CD4-positive, alpha-beta T cell (primary cell): ENCODE measurements at regions of chr2 and their contacts with region 1.

Region 1: GRCh38 chr2:42256505-42256904 is 87.4 kb downstream of the EML4 start:
- DNase-seq: peak in 2 of 14 experiments; percentile 21 to 41
- ATAC-seq: no peak
- H3K4me3 ChIP-seq: no peak overlapping the region
- H3K4me3 Mint-ChIP-seq: peak overlapping the region; percentile 23
- H3K27ac ChIP-seq: peak overlapping the region in 1 of 2 donors; percentile 19
- H3K27ac Mint-ChIP-seq: peak overlapping the region; percentile 45
- H3K4me1 ChIP-seq: peaks cover 8% of the 10 kb centered on the region
- H3K4me1 Mint-ChIP-seq: peaks cover 56% of the 10 kb centered on the region
- H3K27me3 ChIP-seq: no peaks in the 10 kb centered on the region
- H3K27me3 Mint-ChIP-seq: no peaks in the 10 kb centered on the region
- CTCF ChIP-seq: no peak

Region 2: DNA sequence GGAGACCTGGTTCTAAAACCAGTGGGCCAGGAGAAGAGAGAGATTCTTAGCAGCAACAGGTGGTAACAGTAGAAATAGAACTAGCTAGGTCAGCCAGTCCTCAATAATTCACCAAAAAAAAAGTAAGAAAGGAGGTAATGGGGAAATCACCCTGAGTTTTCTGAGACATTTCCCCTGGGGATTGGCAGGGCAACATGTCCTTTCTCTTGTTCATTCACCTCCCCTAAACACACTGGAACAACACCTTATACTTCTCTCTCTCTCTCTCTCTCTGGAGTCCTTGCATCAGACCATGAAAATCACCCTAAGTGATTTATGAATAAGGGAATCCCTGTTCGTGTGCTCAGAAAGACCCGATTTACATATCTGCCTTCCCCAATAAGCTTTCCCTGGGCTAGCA is 39.7 kb after region 1 on chr2:
- CTCF ChIA-PET with region 1: no interaction called
- POLR2A ChIA-PET with region 1: no interaction called
- intact Hi-C with region 1: loop called (anchors 5 kb)
- DNase-seq: peak in 3 of 14 experiments; percentile 14 to 49 (median 38)
- ATAC-seq: no peak
- H3K4me3 ChIP-seq: no peak overlapping the region
- H3K4me3 Mint-ChIP-seq: peak overlapping the region; percentile 0
- H3K27ac ChIP-seq: peak overlapping the region in 1 of 2 donors; percentile 66
- H3K27ac Mint-ChIP-seq: peak overlapping the region; percentile 67
- H3K4me1 ChIP-seq: peaks cover 22% of the 10 kb centered on the region
- H3K4me1 Mint-ChIP-seq: peaks cover 67% of the 10 kb centered on the region
- H3K27me3 ChIP-seq: no peaks in the 10 kb centered on the region
- H3K27me3 Mint-ChIP-seq: no peaks in the 10 kb centered on the region
- CTCF ChIP-seq: no peak

Region 3: GRCh38 chr2:42974721-42975717 is 718.5 kb after region 1 on chr2:
- CTCF ChIA-PET with region 1: no interaction called
- POLR2A ChIA-PET with region 1: no interaction called
- intact Hi-C with region 1: no loop called
- DNase-seq: peak; percentile 13 to 71 (median 46)
- ATAC-seq: peak; percentile 46
- H3K4me3 ChIP-seq: no peak overlapping the region
- H3K4me3 Mint-ChIP-seq: no peak overlapping the region
- H3K27ac ChIP-seq: no peak overlapping the region
- H3K27ac Mint-ChIP-seq: no peak overlapping the region
- H3K4me1 ChIP-seq: peaks cover 9% of the 10 kb centered on the region
- H3K4me1 Mint-ChIP-seq: peaks cover 9% of the 10 kb centered on the region
- H3K27me3 ChIP-seq: no peaks in the 10 kb centered on the region
- H3K27me3 Mint-ChIP-seq: no peaks in the 10 kb centered on the region
- CTCF ChIP-seq: peak; percentile 64